ENCODE measurements at regions of chr10 and their contacts with region 1.

Region 1: DNA sequence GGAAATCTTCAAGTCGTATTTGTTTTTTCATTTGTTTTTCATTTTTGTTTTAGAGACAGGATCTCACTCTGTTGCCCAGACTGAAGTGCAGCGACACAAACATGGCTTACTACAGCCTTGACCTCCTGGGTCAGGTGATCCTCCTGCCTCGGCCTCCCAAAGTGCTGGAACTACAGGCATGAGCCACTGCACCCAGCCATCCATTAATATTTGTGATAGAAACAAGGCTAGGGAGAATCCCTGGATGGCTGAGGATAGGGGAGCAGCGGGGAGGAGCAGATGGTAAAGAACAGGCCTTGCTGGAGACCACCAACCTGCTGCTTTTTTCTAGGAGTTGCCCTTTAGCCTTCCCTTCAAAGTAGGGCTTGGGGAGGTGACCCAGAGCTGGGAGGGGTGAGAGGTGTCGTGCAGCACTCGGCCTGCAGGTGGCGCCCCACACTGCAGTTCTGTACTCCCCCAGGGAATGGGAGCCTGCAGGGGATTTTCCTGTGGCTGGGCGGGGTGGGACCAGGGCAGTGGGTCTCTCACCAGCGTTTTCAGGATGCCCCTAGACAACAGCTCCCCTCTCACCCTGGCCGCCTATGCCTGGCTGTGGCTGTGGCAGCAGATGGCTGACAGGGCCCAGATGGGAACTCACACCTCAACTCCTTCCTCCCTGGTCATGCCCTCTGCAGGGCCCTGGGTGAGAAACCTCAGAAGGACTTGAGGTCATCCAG is 12.6 kb upstream of the CDH23 start:
- DNase-seq: peak; percentile 55 to 78 (median 67)
- H3K4me3 ChIP-seq: no peak overlapping the region
- H3K4me3 Mint-ChIP-seq: no peak overlapping the region
- H3K27ac ChIP-seq: no peak overlapping the region
- H3K27ac Mint-ChIP-seq: no peak overlapping the region
- H3K4me1 ChIP-seq: no peaks in the 10 kb centered on the region
- H3K4me1 Mint-ChIP-seq: no peaks in the 10 kb centered on the region
- H3K27me3 ChIP-seq: no peaks in the 10 kb centered on the region
- H3K27me3 Mint-ChIP-seq: peaks cover 5 to 15% of the 10 kb centered on the region in 2 donors

Region 2: DNA sequence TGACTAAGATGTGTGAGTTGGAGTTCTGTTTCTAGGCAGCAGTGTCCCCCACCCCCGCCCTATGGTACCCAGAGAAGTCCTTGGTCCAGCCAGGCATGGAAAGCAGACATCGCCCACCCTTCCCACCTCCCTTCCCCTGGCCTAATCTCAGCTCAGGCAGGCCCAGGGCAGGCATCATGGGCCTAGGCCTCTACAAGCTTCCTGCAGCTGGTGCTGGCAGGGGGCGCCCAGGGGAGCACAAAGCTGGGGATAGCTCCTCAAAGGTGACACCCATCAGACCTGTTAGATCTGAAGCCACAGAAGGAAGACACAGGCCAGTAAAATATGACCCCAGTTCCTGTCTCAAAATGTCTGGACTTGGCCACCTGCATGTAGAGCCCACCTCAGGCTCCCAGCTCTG is 190.6 kb before region 1 on chr10:
- CTCF ChIA-PET with region 1: no interaction called
- POLR2A ChIA-PET with region 1: no interaction called
- DNase-seq: no peak
- H3K4me3 ChIP-seq: no peak overlapping the region
- H3K4me3 Mint-ChIP-seq: no peak overlapping the region
- H3K27ac ChIP-seq: no peak overlapping the region
- H3K27ac Mint-ChIP-seq: no peak overlapping the region
- H3K4me1 ChIP-seq: no peaks in the 10 kb centered on the region
- H3K4me1 Mint-ChIP-seq: no peaks in the 10 kb centered on the region
- H3K27me3 ChIP-seq: no peaks in the 10 kb centered on the region
- H3K27me3 Mint-ChIP-seq: peaks cover 13 to 23% of the 10 kb centered on the region in 2 donors

Region 3: GRCh38 chr10:71371750-71372166 is 12.4 kb before region 1 on chr10:
- CTCF ChIA-PET with region 1: interaction called, 12 read pairs
- POLR2A ChIA-PET with region 1: no interaction called
- DNase-seq: no peak
- H3K4me3 ChIP-seq: no peak overlapping the region
- H3K4me3 Mint-ChIP-seq: no peak overlapping the region
- H3K27ac ChIP-seq: no peak overlapping the region
- H3K27ac Mint-ChIP-seq: no peak overlapping the region
- H3K4me1 ChIP-seq: peaks cover 4% of the 10 kb centered on the region
- H3K4me1 Mint-ChIP-seq: peaks cover 1 to 8% (median 5%) of the 10 kb centered on the region in 3 donors
- H3K27me3 ChIP-seq: no peaks in the 10 kb centered on the region
- H3K27me3 Mint-ChIP-seq: peaks cover 11 to 26% of the 10 kb centered on the region in 2 donors

Region 4: DNA sequence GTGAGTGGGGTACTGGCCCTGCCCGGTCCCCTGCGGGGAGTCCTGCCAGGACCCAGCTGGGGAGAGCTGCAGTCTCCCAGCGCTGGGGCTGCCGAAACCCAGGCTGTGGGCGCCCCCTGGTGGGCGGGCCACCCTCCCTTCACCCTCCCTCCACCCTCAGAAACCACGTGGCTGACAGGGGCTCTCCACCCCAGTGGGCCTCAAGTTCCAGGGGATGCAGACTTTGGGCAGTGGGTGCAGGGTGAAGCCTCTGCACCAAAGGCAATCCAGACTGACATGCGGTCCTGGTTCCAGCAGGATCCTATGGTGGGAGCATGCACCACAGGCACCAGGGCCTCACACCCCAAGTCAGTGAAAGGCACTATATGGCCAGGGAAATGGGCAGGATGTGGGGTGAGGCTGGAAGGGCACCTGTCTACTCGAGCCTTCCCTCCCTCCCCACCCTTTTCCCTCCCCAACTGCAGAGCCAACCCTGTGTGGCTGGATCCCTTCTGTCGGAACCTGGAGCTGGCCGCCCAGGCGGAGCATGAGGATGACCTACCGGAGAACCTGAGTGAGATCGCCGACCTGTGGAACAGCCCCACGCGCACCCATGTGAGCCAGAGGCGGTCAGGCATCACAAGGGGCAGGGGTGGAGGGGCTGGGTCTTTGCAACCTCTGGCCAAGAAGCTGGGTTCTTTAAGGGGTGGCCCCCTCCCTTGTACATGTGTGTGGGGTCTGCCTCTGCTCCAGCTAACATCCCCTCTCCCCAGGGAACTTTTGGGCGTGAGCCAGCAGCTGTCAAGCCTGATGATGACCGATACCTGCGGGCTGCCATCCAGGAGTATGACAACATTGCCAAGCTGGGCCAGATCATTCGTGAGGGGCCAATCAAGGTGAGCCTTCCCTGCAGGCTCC is 428.1 kb after region 1 on chr10:
- CTCF ChIA-PET with region 1: interaction called, 17 read pairs
- POLR2A ChIA-PET with region 1: no interaction called
- DNase-seq: peak; percentile 61 to 80 (median 74)
- H3K4me3 ChIP-seq: no peak overlapping the region
- H3K4me3 Mint-ChIP-seq: no peak overlapping the region
- H3K27ac ChIP-seq: no peak overlapping the region
- H3K27ac Mint-ChIP-seq: peak overlapping the region in 1 of 8 donors; percentile 19
- H3K4me1 ChIP-seq: peaks cover 5% of the 10 kb centered on the region
- H3K4me1 Mint-ChIP-seq: no peaks in the 10 kb centered on the region
- H3K27me3 ChIP-seq: no peaks in the 10 kb centered on the region
- H3K27me3 Mint-ChIP-seq: no peaks in the 10 kb centered on the region